ENCODE measurements at regions of chr6 and their contacts with region 1.

Region 1: DNA sequence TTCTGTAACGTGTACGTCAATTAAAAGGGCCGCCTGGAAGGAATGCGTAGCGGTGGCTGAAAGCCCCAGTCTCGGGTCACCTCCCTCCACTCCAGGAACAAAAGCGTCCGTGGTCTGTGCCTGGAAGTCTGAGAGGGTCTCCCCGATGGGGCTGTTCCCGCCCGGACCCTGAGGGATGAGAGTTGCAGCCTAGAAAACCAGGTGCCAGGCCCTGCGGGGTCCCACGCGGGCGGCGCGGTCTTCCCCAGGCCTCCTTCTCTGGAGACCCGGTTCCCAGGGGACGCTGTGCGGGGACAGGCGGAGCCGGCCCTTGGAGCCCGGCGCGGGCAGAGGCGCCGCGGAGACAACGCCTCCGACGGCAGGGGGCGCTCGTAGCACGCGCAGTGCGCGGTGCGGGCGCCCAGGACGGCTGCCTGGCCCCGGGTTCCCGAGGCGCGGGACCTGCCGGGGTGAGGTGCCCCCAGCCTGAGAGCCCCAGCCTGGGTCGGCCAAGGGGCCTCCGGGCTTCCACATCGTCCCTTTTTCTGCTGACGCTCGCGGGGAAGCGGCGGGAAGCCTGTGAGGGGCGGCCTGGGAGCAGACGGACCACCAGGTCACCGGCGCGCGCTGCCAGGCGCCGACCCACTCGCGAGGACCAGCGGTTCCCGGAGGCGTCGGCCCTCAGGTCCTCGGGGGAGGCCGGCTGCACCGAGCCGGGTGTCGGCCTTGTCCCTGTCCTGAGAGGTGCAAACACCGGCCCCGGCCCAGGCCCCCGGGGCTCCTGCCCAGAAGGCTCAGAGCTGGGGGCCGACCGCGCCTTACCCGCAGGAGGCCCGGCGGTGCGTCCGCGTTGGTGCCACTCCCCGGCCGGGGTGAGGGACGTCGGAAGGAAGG is 5.3 kb upstream of the FOXC1 start:
- DNase-seq: peak; percentile 34 to 79 (median 71)
- H3K4me3 ChIP-seq: peak overlapping the region; percentile 19
- H3K27ac ChIP-seq: no peak overlapping the region
- H3K4me1 ChIP-seq: peaks cover 5% of the 10 kb centered on the region
- H3K27me3 ChIP-seq: peaks cover 8% of the 10 kb centered on the region
- CTCF ChIP-seq: peak; percentile 89 to 93 (median 89)
- EP300 ChIP-seq: no peak
- POLR2A ChIP-seq: no peak

Region 2: DNA sequence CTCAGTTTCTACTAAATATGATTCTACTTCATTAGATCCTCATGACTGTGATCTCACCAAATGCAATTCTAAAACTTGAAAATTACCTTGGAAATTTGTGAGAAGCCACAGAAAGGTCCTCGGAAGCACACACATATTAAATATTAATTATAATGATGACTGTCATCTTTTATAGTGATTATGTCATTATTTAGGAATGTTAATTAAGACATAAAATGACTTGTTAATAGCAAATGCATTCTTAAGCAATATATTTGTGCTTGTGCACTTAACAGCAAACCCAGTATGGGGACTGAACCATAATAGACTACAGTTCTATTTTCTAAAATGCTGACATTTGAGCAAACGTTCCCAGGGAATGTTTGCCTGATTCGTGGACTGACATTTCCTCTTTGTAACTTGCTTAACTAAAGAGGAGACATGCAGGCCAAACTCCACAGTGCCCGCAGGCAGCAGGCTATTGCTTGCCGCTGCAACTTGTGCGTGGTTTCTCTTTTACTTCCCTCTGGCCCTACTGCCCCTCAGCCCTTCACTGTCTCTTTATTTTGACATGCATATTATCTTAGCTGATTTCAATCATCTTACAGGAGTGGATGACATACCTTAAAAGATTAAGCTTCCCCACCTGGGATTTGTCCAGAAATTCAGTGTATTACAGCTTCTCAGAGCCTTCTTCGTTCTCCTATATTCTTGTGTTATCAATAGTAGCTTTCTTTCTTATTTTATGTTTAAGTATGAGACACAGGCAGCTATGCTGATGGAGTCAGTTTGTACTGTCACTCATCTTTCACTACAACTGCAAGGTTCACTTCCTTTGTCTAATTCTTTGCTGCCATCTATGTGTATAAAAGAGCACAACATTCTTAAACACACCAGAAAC is 499.5 kb after region 1 on chr6:
- intact Hi-C with region 1: loop called (anchors 2 to 5 kb)
- DNase-seq: no peak
- H3K4me3 ChIP-seq: no peak overlapping the region
- H3K27ac ChIP-seq: no peak overlapping the region
- H3K4me1 ChIP-seq: no peaks in the 10 kb centered on the region
- H3K27me3 ChIP-seq: no peaks in the 10 kb centered on the region
- CTCF ChIP-seq: peak in 1 of 3 donors; percentile 31
- EP300 ChIP-seq: no peak
- POLR2A ChIP-seq: no peak

Region 3: DNA sequence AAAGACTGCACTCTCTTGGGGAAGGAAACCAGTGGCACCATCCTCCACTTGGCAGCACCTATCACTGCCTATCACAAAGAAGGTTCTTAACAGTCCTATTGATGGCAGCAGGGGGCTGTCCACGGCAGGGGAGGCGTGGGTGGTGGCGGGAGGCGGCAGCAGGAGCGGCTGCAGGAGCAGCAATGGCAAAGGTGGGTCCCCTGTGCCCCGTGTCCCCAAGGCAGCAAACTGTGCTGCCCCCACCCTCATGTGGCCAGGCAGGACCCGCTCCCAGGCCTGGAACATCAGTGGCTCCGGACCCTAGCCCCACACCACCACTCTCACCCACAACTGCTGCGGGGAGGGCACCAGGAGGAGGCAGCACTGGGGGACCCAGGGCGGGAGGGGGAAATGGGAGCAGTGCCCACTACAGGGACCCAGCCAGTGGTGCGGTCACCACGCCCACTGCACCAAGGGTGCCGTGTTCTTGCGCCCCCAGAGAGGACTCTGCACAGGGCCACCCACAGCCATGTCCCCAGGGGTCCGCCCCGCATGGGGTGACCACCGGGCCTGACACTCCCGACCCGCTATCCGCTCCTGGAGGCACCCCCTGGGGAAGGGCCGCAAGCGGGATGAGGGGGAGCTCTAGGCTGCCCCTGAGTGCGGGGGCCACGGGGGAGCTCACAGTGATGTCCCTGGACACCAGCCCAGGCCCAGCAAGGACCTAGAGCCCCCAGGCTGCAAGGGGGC is 586.4 kb after region 1 on chr6:
- intact Hi-C with region 1: loop called in 3 of 4 experiments (anchors 5 kb)
- DNase-seq: no peak
- H3K4me3 ChIP-seq: no peak overlapping the region
- H3K27ac ChIP-seq: no peak overlapping the region
- H3K4me1 ChIP-seq: no peaks in the 10 kb centered on the region
- H3K27me3 ChIP-seq: no peaks in the 10 kb centered on the region
- CTCF ChIP-seq: no peak
- EP300 ChIP-seq: no peak
- POLR2A ChIP-seq: no peak

Region 4: GRCh38 chr6:2196079-2196679 is 591.8 kb after region 1 on chr6:
- intact Hi-C with region 1: loop called in 3 of 4 experiments (anchors 5 kb)
- DNase-seq: peak in 1 of 5 donors; percentile 36
- H3K4me3 ChIP-seq: no peak overlapping the region
- H3K27ac ChIP-seq: no peak overlapping the region
- H3K4me1 ChIP-seq: no peaks in the 10 kb centered on the region
- H3K27me3 ChIP-seq: no peaks in the 10 kb centered on the region
- CTCF ChIP-seq: peak in 2 of 3 donors; percentile 60 to 65
- EP300 ChIP-seq: no peak
- POLR2A ChIP-seq: no peak

Region 5: GRCh38 chr6:2353412-2354137 is 749.2 kb after region 1 on chr6:
- intact Hi-C with region 1: loop called (anchors 5 to 10 kb)
- DNase-seq: peak; percentile 41 to 75 (median 63)
- H3K4me3 ChIP-seq: no peak overlapping the region
- H3K27ac ChIP-seq: no peak overlapping the region
- H3K4me1 ChIP-seq: peaks cover 5% of the 10 kb centered on the region
- H3K27me3 ChIP-seq: no peaks in the 10 kb centered on the region
- CTCF ChIP-seq: peak; percentile 50 to 70 (median 69)
- EP300 ChIP-seq: no peak
- POLR2A ChIP-seq: no peak

Region 6: GRCh38 chr6:2634139-2634964 is 1030.0 kb after region 1 on chr6:
- intact Hi-C with region 1: loop called (anchors 5 kb)
- DNase-seq: peak; percentile 82 to 91 (median 88)
- H3K4me3 ChIP-seq: peak overlapping the region; percentile 41
- H3K27ac ChIP-seq: peak overlapping the region; percentile 15 to 34
- H3K4me1 ChIP-seq: peaks cover 5% of the 10 kb centered on the region
- H3K27me3 ChIP-seq: no peaks in the 10 kb centered on the region
- CTCF ChIP-seq: peak; percentile 91 to 99 (median 96)
- EP300 ChIP-seq: no peak
- POLR2A ChIP-seq: no peak

Region 7: GRCh38 chr6:2695454-2696095 is 1091.2 kb after region 1 on chr6:
- intact Hi-C with region 1: loop called in 1 of 4 experiments (anchors 5 kb)
- DNase-seq: no peak
- H3K4me3 ChIP-seq: no peak overlapping the region
- H3K27ac ChIP-seq: no peak overlapping the region
- H3K4me1 ChIP-seq: no peaks in the 10 kb centered on the region
- H3K27me3 ChIP-seq: no peaks in the 10 kb centered on the region
- CTCF ChIP-seq: no peak
- EP300 ChIP-seq: no peak
- POLR2A ChIP-seq: no peak